CD8-positive, alpha-beta T cell (primary cell): ENCODE measurements at regions of chr1 and their contacts with region 1.

Region 1: DNA sequence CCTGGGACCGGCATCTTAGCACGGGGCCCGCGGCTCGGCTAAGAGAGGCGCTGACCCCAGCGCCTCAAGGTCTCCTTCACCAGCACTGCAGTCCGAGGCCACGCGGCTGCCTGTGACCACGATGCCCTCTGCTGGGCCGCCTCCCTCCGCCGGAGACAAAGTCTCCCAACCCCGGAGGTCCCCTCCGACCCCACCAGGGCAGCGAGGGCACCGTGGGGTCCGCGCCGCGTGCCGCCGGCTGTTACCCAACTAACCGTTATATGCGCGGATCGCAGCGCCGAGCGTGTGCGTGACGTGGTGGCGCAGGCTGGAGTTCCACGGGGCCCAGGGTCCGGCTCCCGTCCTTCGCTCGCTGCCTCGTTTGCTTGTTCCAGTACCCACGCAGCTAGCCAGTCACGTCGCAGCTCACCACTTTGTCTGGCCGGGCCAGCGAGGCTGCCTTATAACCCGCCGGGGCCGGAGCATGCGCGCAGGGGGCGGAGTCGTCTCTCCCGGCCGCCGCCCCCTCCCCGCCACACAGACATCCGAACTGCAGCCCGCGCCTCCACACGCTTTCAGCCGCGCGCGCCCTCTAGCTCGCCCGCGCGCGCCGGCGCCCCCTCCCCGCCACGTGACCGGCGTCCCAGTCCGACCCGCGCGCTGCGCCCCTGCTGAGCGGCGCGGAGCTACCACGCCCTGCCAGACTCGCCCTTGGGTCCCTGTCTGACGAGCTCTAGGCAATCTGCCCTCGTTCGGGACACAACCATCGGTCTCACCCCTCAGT is at the start of gene SLC16A1:
- DNase-seq: peak; percentile 68 to 92 (median 86)
- ATAC-seq: peak; percentile 78
- H3K4me3 ChIP-seq: peak within 1 kb of the TSS; percentile 97 to 98
- H3K4me3 Mint-ChIP-seq: peak within 1 kb of the TSS; percentile 98
- H3K27ac ChIP-seq: peak within 1 kb of the TSS; percentile 79 to 87
- H3K27ac Mint-ChIP-seq: peak within 1 kb of the TSS; percentile 90
- H3K4me1 ChIP-seq: peaks cover 25% of the 10 kb centered on the region
- H3K4me1 Mint-ChIP-seq: peaks cover 63% of the 10 kb centered on the region
- H3K27me3 ChIP-seq: no peaks in the 10 kb centered on the region
- H3K27me3 Mint-ChIP-seq: no peaks in the 10 kb centered on the region
- CTCF ChIP-seq: no peak
- total RNA-seq, gene SLC16A1: 34.0 to 34.1 TPM

Region 2: GRCh38 chr1:112317140-112317539 is 638.8 kb before region 1 on chr1:
- CTCF ChIA-PET with region 1: no interaction called
- POLR2A ChIA-PET with region 1: no interaction called
- intact Hi-C with region 1: no loop called
- DNase-seq: no peak
- ATAC-seq: no peak
- H3K4me3 ChIP-seq: no peak overlapping the region
- H3K4me3 Mint-ChIP-seq: no peak overlapping the region
- H3K27ac ChIP-seq: no peak overlapping the region
- H3K27ac Mint-ChIP-seq: no peak overlapping the region
- H3K4me1 ChIP-seq: no peaks in the 10 kb centered on the region
- H3K4me1 Mint-ChIP-seq: peaks cover 2% of the 10 kb centered on the region
- H3K27me3 ChIP-seq: peaks cover 0 to 3% of the 10 kb centered on the region in 2 experiments
- H3K27me3 Mint-ChIP-seq: peaks cover 19% of the 10 kb centered on the region
- CTCF ChIP-seq: no peak

Region 3: GRCh38 chr1:112395821-112396652 is 559.9 kb before region 1 on chr1 and contains the start of gene CTTNBP2NL:
- CTCF ChIA-PET with region 1: no interaction called
- POLR2A ChIA-PET with region 1: no interaction called
- intact Hi-C with region 1: loop called in 1 of 2 experiments (anchors 5 kb)
- DNase-seq: peak; percentile 51 to 87 (median 78)
- ATAC-seq: peak; percentile 98
- H3K4me3 ChIP-seq: peak within 1 kb of the TSS; percentile 86 to 89
- H3K4me3 Mint-ChIP-seq: peak within 1 kb of the TSS; percentile 83
- H3K27ac ChIP-seq: no peak within 1 kb of the TSS
- H3K27ac Mint-ChIP-seq: peak within 1 kb of the TSS; percentile 37
- H3K4me1 ChIP-seq: peaks cover 15% of the 10 kb centered on the region
- H3K4me1 Mint-ChIP-seq: peaks cover 15% of the 10 kb centered on the region
- H3K27me3 ChIP-seq: peaks cover 3% of the 10 kb centered on the region in 2 experiments
- H3K27me3 Mint-ChIP-seq: peaks cover 21% of the 10 kb centered on the region
- CTCF ChIP-seq: no peak
- total RNA-seq, gene CTTNBP2NL: not detected

Region 4: DNA sequence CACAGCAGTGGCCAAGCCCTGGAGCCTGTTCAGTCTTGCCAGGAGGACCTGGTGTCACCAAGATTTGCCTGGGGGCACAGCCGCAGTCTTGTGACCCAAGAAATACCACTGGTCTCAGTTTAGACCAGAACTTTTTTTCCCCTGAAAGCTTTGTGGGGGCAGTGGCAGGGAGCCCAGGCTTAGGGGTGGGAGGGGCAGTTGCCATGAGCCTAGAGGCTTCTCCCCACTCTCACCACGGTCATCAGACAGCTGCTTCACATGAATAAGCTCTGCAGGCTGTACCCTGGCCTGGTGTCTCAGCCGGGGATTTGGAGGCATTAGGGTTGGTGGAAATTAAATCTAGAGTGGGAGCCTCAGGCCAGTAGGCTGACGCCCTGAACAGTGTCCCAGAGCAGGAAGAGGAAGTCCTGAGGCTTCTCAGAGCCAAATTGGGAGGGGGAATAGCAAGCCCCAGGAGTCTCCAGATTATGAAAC is 73.7 kb before region 1 on chr1:
- CTCF ChIA-PET with region 1: interaction called, 4 read pairs
- POLR2A ChIA-PET with region 1: no interaction called
- intact Hi-C with region 1: loop called (anchors 1 to 5 kb)
- DNase-seq: no peak
- ATAC-seq: no peak
- H3K4me3 ChIP-seq: no peak overlapping the region
- H3K4me3 Mint-ChIP-seq: no peak overlapping the region
- H3K27ac ChIP-seq: no peak overlapping the region
- H3K27ac Mint-ChIP-seq: peak overlapping the region; percentile 37
- H3K4me1 ChIP-seq: no peaks in the 10 kb centered on the region
- H3K4me1 Mint-ChIP-seq: no peaks in the 10 kb centered on the region
- H3K27me3 ChIP-seq: no peaks in the 10 kb centered on the region
- H3K27me3 Mint-ChIP-seq: peaks cover 3% of the 10 kb centered on the region
- CTCF ChIP-seq: no peak

Region 5: DNA sequence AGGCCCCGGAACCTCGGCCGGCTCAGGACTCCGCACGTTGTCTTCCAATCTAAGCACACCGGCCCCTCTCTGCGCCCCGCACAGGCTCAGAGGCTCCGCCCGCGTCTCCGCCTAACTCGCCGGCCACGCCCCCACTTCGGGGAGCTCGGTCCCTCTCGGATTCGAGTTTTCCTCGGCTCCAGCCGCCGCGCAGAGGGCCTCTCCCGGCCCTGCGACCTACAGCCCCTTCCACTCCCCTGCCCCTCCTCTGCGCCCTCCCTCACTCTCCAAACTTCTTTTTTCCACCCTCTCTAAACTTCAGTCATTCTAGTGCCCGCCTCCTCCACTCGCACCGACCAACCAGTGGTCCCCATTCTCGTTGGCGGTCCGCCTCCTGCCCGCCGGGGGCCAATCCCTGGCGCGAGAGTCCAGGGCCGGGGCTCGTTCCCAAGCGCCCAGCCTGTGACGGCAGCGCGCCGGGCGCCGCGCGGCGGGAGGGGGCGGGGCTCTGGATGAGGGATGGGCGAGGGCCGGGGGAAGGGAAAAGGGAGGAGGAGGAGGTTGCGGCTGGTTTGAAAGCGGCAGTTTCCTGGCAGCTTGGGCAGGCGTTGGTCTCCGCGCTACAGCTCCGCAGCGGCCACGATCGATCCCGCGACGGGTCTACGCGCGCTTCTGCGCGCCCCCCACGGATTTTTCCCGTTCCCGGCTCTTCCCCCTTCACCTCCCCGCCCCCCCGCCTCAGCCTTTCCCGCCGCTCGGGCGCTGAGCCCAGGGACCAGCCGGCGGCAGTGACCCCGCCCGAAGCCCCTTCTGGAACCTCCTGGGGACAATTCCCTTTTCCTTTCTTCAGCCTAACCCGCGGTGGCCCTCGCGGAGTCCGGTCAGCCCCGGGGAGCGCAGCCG is 434.2 kb after region 1 on chr1 and contains the start of gene MAGI3:
- CTCF ChIA-PET with region 1: no interaction called
- POLR2A ChIA-PET with region 1: no interaction called
- intact Hi-C with region 1: loop called in 1 of 2 experiments (anchors 5 kb)
- DNase-seq: peak; percentile 70 to 93 (median 88)
- ATAC-seq: peak; percentile 91
- H3K4me3 ChIP-seq: peak within 1 kb of the TSS; percentile 94 to 97
- H3K4me3 Mint-ChIP-seq: peak within 1 kb of the TSS; percentile 95
- H3K27ac ChIP-seq: peak within 1 kb of the TSS; percentile 30 to 47
- H3K27ac Mint-ChIP-seq: peak within 1 kb of the TSS; percentile 84
- H3K4me1 ChIP-seq: peaks cover 13% of the 10 kb centered on the region
- H3K4me1 Mint-ChIP-seq: peaks cover 24% of the 10 kb centered on the region
- H3K27me3 ChIP-seq: peaks cover 0 to 5% of the 10 kb centered on the region in 2 experiments
- H3K27me3 Mint-ChIP-seq: peaks cover 12% of the 10 kb centered on the region
- CTCF ChIP-seq: no peak
- total RNA-seq, gene MAGI3: 1.7 to 3.2 TPM